ENCODE measurements at regions of chr1 and their contacts with region 1.

Region 1: DNA sequence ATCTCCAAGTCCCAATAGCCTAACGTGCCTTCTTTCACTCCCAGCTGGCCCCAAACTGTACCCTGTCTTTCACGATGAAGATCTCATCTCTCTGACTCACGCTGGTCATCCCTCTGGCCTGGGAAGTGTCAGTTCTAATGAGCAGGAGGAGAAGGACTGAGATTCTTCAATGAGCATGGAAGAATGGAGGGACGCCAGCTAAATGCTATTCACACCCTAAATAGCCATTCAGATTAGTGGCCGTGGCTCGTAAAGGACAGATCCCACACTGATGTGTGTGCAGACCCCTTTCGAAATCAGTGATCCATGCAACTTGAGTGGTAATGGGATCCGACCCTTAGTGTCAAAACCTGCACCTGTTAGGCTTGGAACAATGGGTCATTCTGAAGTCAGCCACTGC is 75.9 kb upstream of the SMYD2 start:
- DNase-seq: no peak
- H3K4me3 ChIP-seq: no peak overlapping the region
- CTCF ChIP-seq: no peak
- POLR2A ChIP-seq: no peak

Region 2: GRCh38 chr1:213399695-213400094 is 805.4 kb before region 1 on chr1:
- intact Hi-C with region 1: loop called (anchors 10 kb)
- DNase-seq: no peak
- H3K4me3 ChIP-seq: no peak overlapping the region
- CTCF ChIP-seq: no peak
- POLR2A ChIP-seq: no peak

Region 3: DNA sequence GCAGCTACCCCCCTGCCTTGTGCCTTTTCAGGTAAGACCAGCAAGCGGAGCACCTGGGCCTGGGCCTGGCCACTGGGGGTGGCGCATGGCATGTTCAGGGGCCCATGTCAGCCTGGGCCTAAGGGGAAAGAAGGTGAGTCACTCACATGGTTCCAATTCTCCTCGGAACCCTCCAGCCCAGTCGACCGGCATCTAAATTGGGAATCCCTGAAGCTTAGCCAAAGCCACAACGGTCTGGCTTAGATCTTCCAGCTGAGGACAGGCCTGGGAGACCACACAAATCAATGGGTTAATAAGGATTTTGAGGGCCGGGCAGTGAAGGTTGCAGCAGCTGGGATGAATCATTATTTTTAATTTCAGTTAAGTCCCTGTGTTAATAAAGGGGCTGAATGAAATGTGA is 69.2 kb before region 1 on chr1:
- intact Hi-C with region 1: no loop called
- DNase-seq: no peak
- H3K4me3 ChIP-seq: no peak overlapping the region
- CTCF ChIP-seq: no peak
- POLR2A ChIP-seq: no peak

Region 4: DNA sequence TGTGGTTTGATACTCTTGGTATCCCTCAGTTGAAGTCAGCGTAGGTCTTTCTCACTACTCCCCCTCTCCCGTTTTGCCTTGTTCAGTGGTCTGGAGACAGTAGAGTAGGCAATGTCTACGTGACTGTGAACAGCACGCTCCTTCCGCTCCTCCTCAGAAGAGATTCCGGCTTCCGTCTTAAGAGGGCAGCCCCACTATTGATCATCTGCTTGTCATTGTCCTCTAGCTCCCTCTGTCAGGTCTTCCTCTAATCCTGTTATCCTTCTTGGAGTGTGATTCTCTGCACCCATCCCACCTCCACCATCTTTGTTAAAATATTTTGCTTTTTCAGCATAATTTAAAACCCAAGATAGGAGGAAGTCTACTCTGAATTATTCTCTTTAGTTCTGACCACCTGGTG is 747.6 kb after region 1 on chr1:
- intact Hi-C with region 1: no loop called
- DNase-seq: no peak
- H3K4me3 ChIP-seq: no peak overlapping the region
- CTCF ChIP-seq: no peak
- POLR2A ChIP-seq: no peak

Region 5: GRCh38 chr1:215001419-215002021 is 796.5 kb after region 1 on chr1:
- intact Hi-C with region 1: no loop called
- DNase-seq: no peak
- H3K4me3 ChIP-seq: no peak overlapping the region
- CTCF ChIP-seq: no peak
- POLR2A ChIP-seq: no peak